ENCODE measurements at regions of chr11 and their contacts with region 1.

Region 1: DNA sequence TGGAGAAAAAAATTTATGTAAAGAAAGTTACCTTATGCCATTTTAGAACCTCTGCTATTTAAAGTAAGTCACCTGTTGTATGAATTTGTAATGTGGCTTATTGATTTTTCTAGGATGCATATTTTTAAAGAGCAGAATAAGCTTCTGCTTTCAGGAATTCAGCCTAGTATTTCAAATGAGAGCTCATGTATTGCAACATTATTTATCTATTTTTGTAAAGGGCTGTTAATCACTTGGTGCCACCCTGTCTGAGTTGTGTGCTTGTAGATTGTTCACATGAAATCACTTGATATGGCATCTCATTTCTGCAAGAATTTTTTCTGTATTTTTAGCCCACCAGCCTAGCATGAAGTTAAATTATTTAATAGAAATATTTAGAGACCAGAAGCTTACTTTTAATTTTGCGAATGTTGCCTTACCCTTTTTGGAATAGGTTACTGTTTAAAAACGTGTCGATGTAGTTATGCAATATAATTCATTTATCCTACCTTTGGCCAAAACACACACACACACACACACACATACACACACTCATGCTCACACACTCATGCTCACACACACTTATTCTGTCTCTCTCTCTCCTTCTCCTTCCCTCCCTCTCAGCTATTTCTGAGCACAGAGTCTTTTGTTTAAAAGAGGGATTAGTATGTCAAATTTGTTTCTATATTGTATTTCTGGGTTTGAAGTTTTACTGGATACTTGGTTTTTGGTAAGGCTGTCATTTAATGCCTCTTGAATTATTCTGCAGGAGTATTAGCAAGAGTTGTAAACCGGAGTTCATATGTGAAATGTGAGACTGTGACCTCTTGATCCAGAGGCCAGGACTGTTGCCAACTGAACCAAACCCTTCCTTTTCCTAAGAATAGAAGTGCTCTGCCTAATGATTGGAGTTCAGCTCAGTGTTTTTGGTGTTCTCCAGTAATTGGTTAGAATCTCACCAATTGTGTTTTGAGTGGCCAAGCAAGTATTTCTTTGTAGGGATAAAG is 34.4 kb downstream of the YAP1 start:
- DNase-seq: no peak
- ATAC-seq: peak; percentile 70
- H3K4me3 ChIP-seq: no peak overlapping the region
- H3K27ac ChIP-seq: peak overlapping the region; percentile 44 to 90
- H3K4me1 ChIP-seq: peaks cover 3 to 9% of the 10 kb centered on the region in 2 donors
- H3K27me3 ChIP-seq: no peaks in the 10 kb centered on the region

Region 2: GRCh38 chr11:102177974-102178631 is 33.5 kb after region 1 on chr11:
- intact Hi-C with region 1: loop called in 1 of 2 experiments (anchors 5 kb)
- DNase-seq: no peak
- ATAC-seq: peak; percentile 86
- H3K4me3 ChIP-seq: no peak overlapping the region
- H3K27ac ChIP-seq: peak overlapping the region; percentile 75 to 82
- H3K4me1 ChIP-seq: peaks cover 1 to 2% of the 10 kb centered on the region in 2 donors
- H3K27me3 ChIP-seq: no peaks in the 10 kb centered on the region